ENCODE measurements at regions of chr22 and their contacts with region 1.

Region 1: GRCh38 chr22:37538590-37539357 is 19.6 kb upstream of the CARD10 start:
- DNase-seq: peak; percentile 93
- ATAC-seq: peak; percentile 95

Region 2: GRCh38 chr22:37571258-37571991 is 32.7 kb after region 1 on chr22:
- intact Hi-C with region 1: loop called in 1 of 2 experiments (anchors 5 kb)
- DNase-seq: no peak
- ATAC-seq: no peak

Region 3: GRCh38 chr22:37599153-37599552 is 60.4 kb after region 1 on chr22:
- intact Hi-C with region 1: loop called in 1 of 2 experiments (anchors 10 kb)
- DNase-seq: peak; percentile 82 to 91
- ATAC-seq: peak; percentile 71